Activated naive CD4-positive, alpha-beta T cell treated with anti-CD3 and anti-CD28 coated beads, Interleukin-2, amount 10 ng/mL, durations not matched to agents 7 days and 5 days (primary cell): ENCODE measurements at regions of chr7 and their contacts with region 1.

Region 1: GRCh38 chr7:120987683-120988590 is 574 bp upstream of the CPED1 start:
- DNase-seq: peak; percentile 91
- H3K4me3 Mint-ChIP-seq: peak overlapping the region; percentile 60
- H3K27ac Mint-ChIP-seq: no peak overlapping the region
- H3K4me1 Mint-ChIP-seq: peaks cover 19% of the 10 kb centered on the region
- H3K27me3 Mint-ChIP-seq: peaks cover 34% of the 10 kb centered on the region

Region 2: DNA sequence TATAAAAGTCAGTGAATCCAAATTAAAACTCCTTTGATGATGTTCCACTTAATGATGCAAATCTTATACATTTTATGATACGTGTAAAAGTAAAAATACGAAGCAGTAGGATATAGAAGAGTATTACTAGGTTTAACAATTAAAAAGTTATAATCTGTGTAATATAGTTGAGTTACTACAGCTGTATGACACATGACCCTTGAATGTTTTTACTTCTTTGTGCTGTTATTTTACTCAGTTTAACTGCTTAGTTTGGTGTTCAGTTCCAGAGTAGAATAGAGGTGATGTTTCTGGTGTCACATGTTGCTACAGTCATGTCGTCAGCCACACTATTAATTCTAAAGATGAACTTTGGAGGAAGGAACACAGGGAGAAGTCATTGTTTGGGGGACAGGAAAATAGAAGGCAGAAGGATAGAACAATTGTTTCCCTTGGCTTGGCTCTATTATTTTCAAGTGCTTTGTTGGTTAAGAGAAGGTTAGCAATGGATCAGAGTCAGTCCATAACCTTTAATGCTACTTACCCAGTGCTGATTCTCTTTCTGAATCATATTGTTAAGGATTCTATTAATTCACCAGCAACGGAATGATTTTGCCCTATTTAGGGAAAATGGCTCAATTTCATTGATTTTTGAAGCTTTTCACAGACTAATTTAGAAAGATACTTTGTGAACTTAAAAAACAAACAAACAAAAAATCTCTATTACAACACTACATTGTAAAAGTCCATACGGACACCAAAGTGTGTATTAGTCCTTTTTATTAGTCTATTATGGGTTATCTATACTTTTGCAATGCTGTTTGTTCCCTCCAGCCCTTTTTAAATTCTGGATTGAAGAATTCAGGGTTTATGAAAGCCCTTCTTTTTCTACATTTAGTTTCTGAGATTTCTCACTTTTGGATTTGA is 74.0 kb after region 1 on chr7:
- CTCF ChIA-PET with region 1: no interaction called
- DNase-seq: no peak
- H3K4me3 Mint-ChIP-seq: no peak overlapping the region
- H3K27ac Mint-ChIP-seq: no peak overlapping the region
- H3K4me1 Mint-ChIP-seq: no peaks in the 10 kb centered on the region
- H3K27me3 Mint-ChIP-seq: no peaks in the 10 kb centered on the region

Region 3: DNA sequence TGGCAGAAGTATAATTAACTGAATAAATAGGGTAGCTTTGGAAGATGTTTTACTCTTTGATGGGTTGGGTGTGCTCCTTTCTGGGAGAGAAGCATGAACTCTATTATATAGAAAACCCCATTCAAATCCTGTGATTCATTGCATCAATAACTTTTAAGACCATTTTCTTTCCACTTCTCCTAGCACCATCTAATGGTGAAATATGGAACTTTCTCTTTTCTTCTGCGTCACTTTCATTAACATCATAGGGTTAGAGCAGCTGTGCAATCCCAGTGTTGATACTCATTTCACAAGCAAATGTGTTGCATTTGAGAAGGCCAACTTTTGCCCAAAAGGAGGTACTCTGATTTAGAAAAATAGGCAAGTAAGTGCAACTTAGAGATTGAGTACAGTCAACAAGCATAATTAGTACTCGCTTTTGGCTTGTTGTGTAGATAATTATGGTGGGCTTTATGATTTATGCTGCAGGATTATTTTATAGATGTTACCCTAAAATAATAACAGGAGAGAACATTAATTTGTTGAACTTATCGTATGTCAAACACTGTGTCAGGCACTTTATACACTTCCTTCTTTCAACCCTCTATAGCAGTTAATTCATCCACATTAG is 93.5 kb after region 1 on chr7:
- CTCF ChIA-PET with region 1: interaction called, 50 read pairs
- DNase-seq: no peak
- H3K4me3 Mint-ChIP-seq: no peak overlapping the region
- H3K27ac Mint-ChIP-seq: no peak overlapping the region
- H3K4me1 Mint-ChIP-seq: no peaks in the 10 kb centered on the region
- H3K27me3 Mint-ChIP-seq: peaks cover 9% of the 10 kb centered on the region

Region 4: GRCh38 chr7:121107923-121108498 is 120.1 kb after region 1 on chr7:
- CTCF ChIA-PET with region 1: interaction called, 20 read pairs
- DNase-seq: no peak
- H3K4me3 Mint-ChIP-seq: no peak overlapping the region
- H3K27ac Mint-ChIP-seq: no peak overlapping the region
- H3K4me1 Mint-ChIP-seq: no peaks in the 10 kb centered on the region
- H3K27me3 Mint-ChIP-seq: peaks cover 8% of the 10 kb centered on the region